ENCODE measurements at regions of chr1 and their contacts with region 1.

Region 1: GRCh38 chr1:116139592-116140134 is 28.5 kb downstream of the MAB21L3 start:
- DNase-seq: no peak
- ATAC-seq: no peak
- H3K4me3 ChIP-seq: no peak overlapping the region
- H3K4me3 Mint-ChIP-seq: no peak overlapping the region
- H3K27ac ChIP-seq: no peak overlapping the region
- H3K27ac Mint-ChIP-seq: no peak overlapping the region
- H3K4me1 ChIP-seq: no peaks in the 10 kb centered on the region
- H3K4me1 Mint-ChIP-seq: peaks cover 5% of the 10 kb centered on the region
- H3K27me3 ChIP-seq: peaks cover 0 to 5% (median under 1%) of the 10 kb centered on the region in 4 experiments
- H3K27me3 Mint-ChIP-seq: peaks cover 11% of the 10 kb centered on the region
- CTCF ChIP-seq: no peak

Region 2: DNA sequence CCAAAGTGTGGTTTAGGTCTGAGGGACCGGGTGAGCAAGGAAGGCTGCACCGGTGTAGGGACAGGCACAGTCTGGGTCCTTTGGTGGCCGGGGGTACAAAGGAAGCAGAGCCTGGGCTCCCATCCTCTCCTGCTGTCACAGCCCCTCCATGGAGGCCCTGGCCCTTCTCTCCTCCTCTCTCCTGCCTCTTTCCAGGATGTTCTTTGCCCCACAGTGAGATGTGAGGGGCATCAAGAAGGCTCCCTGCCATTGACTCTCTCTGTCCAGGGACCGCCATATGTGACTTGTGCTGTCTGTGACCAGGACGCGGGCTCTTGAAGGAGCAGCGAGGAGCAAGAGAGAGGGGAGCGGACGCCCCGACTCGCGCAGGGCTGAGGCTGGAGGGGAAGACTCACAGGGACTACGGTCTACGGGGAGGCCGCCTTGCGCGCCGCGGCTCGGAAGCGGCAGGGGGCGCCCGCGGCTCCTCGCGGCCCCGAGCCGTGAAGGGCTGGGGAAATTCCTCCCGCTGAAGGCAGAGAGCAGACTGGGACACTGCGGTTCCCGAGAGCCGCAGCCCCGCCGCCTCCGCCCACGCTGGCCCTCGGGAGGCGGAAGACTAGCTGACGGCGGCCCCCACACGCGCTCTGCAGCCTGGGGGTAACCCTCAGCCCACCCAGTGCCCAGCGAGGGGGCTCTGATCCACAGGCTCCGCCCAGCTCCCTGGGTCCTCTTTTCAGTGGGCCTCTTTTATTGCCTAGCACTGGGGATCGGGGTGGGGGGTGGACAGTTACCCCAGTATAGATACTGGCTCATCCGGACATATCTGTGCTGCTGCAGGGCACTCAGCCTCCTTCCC is 12.3 kb after region 1 on chr1:
- CTCF ChIA-PET with region 1: interaction called, 45 read pairs
- POLR2A ChIA-PET with region 1: no interaction called
- intact Hi-C with region 1: no loop called
- DNase-seq: peak; percentile 86
- ATAC-seq: peak; percentile 98
- H3K4me3 ChIP-seq: peak overlapping the region in 4 of 5 experiments; percentile 17 to 44 (median 41)
- H3K4me3 Mint-ChIP-seq: peak overlapping the region; percentile 65
- H3K27ac ChIP-seq: no peak overlapping the region
- H3K27ac Mint-ChIP-seq: no peak overlapping the region
- H3K4me1 ChIP-seq: peaks cover 7 to 11% of the 10 kb centered on the region in 2 donors
- H3K4me1 Mint-ChIP-seq: peaks cover 8% of the 10 kb centered on the region
- H3K27me3 ChIP-seq: no peaks in the 10 kb centered on the region
- H3K27me3 Mint-ChIP-seq: peaks cover 15% of the 10 kb centered on the region
- CTCF ChIP-seq: peak; percentile 90

Region 3: GRCh38 chr1:116168277-116169097 is 28.8 kb after region 1 on chr1:
- CTCF ChIA-PET with region 1: interaction called, 12 read pairs
- POLR2A ChIA-PET with region 1: no interaction called
- intact Hi-C with region 1: loop called (anchors 2 kb)
- DNase-seq: peak; percentile 83
- ATAC-seq: peak; percentile 94
- H3K4me3 ChIP-seq: peak overlapping the region; percentile 21 to 62 (median 54)
- H3K4me3 Mint-ChIP-seq: peak overlapping the region; percentile 85
- H3K27ac ChIP-seq: peak overlapping the region in 1 of 2 donors; percentile 4
- H3K27ac Mint-ChIP-seq: peak overlapping the region; percentile 66
- H3K4me1 ChIP-seq: peaks cover 15 to 16% of the 10 kb centered on the region in 2 donors
- H3K4me1 Mint-ChIP-seq: peaks cover 16% of the 10 kb centered on the region
- H3K27me3 ChIP-seq: peaks cover 0 to 19% (median 3%) of the 10 kb centered on the region in 4 experiments
- H3K27me3 Mint-ChIP-seq: peaks cover 24% of the 10 kb centered on the region
- CTCF ChIP-seq: peak; percentile 96

Region 4: DNA sequence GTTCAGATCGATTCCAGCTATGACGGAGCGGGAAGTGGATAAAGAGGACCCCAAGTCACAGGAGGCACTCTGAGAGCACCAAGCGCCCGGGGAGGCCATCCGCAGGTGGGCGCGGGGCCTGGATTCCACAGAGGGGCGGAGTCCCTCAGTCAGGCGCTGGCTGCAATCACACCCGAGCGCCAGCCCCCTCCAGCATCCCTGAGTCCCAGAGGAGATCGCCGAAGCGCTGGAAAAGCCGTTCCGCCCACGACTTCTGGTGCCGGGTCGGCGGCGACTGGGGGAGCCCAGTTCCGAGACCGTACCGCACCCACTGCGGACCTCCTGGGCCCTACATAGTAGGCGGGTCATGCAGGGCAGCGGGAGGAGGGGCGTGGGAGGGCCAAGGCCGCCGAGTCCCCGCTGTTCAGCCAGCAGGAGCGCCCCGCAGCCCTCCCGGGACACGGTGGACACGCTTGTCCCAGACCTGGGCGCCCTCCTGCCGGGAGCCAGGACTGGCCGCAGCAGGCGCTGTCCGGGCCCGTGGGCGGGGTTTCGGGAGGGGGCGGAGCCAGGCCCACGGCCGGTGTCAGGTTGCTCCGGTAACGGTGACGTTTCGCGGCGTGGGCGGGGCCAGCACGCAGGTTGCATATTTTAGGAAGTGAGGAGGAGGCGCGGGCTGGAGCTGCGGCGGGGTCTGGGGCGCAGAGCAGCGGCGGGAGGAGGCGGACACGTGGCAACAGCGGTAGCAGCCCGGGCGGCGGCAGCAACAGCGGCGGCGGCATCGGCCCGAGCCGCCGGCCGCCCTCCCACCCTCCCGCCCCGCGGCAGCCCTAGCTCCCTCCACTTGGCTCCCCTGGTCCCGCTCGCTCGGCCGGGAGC is 233.2 kb after region 1 on chr1 and contains the start of gene ATP1A1:
- CTCF ChIA-PET with region 1: interaction called, 8 read pairs
- POLR2A ChIA-PET with region 1: no interaction called
- intact Hi-C with region 1: loop called (anchors 5 kb)
- DNase-seq: peak; percentile 99
- ATAC-seq: peak; percentile 79
- H3K4me3 ChIP-seq: peak within 1 kb of the TSS; percentile 46 to 90 (median 84)
- H3K4me3 Mint-ChIP-seq: peak within 1 kb of the TSS; percentile 96
- H3K27ac ChIP-seq: peak within 1 kb of the TSS; percentile 81 to 91
- H3K27ac Mint-ChIP-seq: peak within 1 kb of the TSS; percentile 96
- H3K4me1 ChIP-seq: peaks cover 39 to 44% of the 10 kb centered on the region in 2 donors
- H3K4me1 Mint-ChIP-seq: peaks cover 37% of the 10 kb centered on the region
- H3K27me3 ChIP-seq: peaks cover 0 to 7% (median 3%) of the 10 kb centered on the region in 4 experiments
- H3K27me3 Mint-ChIP-seq: peaks cover 20% of the 10 kb centered on the region
- CTCF ChIP-seq: no peak
- total RNA-seq, gene ATP1A1: 101 and 107 TPM in 2 replicates

Region 5: GRCh38 chr1:116498789-116499628 is 359.3 kb after region 1 on chr1:
- CTCF ChIA-PET with region 1: interaction called, 578 read pairs
- POLR2A ChIA-PET with region 1: no interaction called
- intact Hi-C with region 1: loop called (anchors 1 kb)
- DNase-seq: peak; percentile 65
- ATAC-seq: peak; percentile 76
- H3K4me3 ChIP-seq: no peak overlapping the region
- H3K4me3 Mint-ChIP-seq: no peak overlapping the region
- H3K27ac ChIP-seq: no peak overlapping the region
- H3K27ac Mint-ChIP-seq: no peak overlapping the region
- H3K4me1 ChIP-seq: peaks cover 14 to 16% of the 10 kb centered on the region in 2 donors
- H3K4me1 Mint-ChIP-seq: peaks cover 23% of the 10 kb centered on the region
- H3K27me3 ChIP-seq: no peaks in the 10 kb centered on the region
- H3K27me3 Mint-ChIP-seq: no peaks in the 10 kb centered on the region
- CTCF ChIP-seq: peak; percentile 80

Region 6: DNA sequence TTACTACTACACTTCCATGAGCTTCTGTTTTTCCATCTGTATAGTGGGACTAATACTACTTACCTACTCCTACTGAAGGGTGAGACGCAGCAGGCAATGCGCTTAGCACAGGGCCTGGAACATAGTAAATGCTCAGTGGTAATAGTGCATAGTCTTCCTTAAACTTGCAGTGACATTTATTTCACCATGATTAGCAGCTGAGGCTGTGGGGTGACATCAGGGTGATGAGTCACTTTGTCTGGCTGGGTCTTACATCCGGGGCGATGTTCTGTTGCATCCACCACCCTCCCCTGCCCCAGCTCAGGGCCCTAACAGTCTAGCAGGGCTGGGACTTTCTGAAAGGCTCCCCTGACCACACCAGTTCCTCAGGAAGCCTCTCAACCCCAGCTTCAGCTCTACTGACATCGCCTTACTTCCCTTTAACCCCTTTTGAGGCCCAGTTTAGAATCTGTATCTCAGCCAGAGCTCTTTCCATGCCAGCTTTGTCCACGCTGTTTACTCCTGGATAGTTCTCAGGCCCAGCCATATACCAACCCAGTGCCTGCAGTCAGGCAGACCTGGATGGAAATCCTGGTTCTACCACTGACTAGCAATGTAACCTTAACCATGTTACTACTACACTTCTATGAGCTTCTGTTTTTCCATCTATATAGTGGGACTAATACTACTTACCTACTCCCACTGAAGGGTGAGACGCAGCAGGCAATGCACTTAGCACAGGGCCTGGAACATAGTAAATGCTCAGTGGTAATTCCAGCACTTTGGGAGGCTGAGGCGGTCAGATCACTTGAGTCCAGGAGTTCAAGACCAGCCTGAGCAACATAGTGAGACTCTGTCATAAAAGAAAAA is 364.9 kb after region 1 on chr1:
- CTCF ChIA-PET with region 1: interaction called, 127 read pairs
- POLR2A ChIA-PET with region 1: no interaction called
- intact Hi-C with region 1: loop called (anchors 1 kb)
- DNase-seq: peak; percentile 89
- ATAC-seq: peak; percentile 98
- H3K4me3 ChIP-seq: no peak overlapping the region
- H3K4me3 Mint-ChIP-seq: peak overlapping the region; percentile 50
- H3K27ac ChIP-seq: peak overlapping the region; percentile 66 to 77
- H3K27ac Mint-ChIP-seq: peak overlapping the region; percentile 83
- H3K4me1 ChIP-seq: peaks cover 24 to 31% of the 10 kb centered on the region in 2 donors
- H3K4me1 Mint-ChIP-seq: peaks cover 45% of the 10 kb centered on the region
- H3K27me3 ChIP-seq: no peaks in the 10 kb centered on the region
- H3K27me3 Mint-ChIP-seq: no peaks in the 10 kb centered on the region
- CTCF ChIP-seq: no peak